Pancreas (tissue), 10 donors: ENCODE measurements at regions of chr6 and their contacts with region 1.

Region 1: GRCh38 chr6:159862103-159862502 is 28.7 kb upstream of the MAS1 start:
- DNase-seq: no peak
- ATAC-seq: no peak
- H3K4me3 ChIP-seq: no peak overlapping the region
- H3K27ac ChIP-seq: no peak overlapping the region
- H3K4me1 ChIP-seq: no peaks in the 10 kb centered on the region
- H3K27me3 ChIP-seq: no peaks in the 10 kb centered on the region
- CTCF ChIP-seq: no peak

Region 2: DNA sequence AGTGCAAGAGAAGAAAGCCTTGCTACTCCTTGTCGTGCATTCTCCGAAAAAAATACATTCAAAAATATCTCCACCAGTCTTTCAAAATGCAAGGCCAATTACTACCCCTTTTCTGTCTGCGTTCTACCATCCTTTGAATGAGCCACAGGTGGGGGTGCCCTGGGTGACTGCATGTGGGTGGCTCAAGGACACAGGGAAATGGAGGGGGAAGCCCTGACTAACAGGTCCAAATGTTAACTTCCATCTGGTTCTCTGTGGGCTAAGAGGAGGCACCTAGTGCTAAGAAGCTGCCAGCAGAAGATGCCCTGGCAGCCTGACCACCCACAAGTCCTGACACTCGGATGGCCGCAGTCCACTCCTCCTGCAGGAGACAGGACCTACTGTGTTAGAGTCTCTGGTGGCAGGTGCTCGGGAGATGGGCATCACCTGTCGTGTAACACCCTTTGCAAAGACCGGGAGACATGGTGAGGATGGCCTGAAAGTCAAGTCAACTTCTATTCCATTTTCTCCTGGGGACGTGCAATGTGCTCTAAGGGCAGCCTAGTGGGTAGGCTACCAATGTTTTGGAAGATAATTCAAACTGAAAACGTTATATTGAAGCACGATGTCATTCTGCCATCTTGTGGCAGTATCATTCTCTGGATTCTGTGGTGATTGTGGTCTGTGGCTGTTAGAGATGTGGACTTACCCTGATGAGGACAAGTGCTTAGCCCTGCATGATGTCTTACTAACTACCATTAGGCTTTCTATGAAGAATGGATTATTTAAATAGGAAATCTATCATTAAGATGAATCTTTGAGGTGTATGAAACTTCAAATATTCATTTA is 79.4 kb after region 1 on chr6:
- intact Hi-C with region 1: loop called in 1 of 3 experiments (anchors 10 kb)
- DNase-seq: no peak
- ATAC-seq: peak in 3 of 4 donors; percentile 27 to 57 (median 56)
- H3K4me3 ChIP-seq: no peak overlapping the region
- H3K27ac ChIP-seq: no peak overlapping the region
- H3K4me1 ChIP-seq: peaks cover 11 to 13% (median 12%) of the 10 kb centered on the region in 3 donors
- H3K27me3 ChIP-seq: no peaks in the 10 kb centered on the region
- CTCF ChIP-seq: peak in 2 of 4 donors; percentile 13 to 16